Naive thymus-derived CD4-positive, alpha-beta T cell (primary cell): ENCODE measurements at regions of chr6 and their contacts with region 1.

Region 1: GRCh38 chr6:149316798-149317655 is 485 bp upstream of the TAB2 start:
- DNase-seq: peak; percentile 83 to 91 (median 88)
- ATAC-seq: peak; percentile 86
- H3K4me3 ChIP-seq: peak overlapping the region; percentile 73
- H3K4me3 Mint-ChIP-seq: peak overlapping the region; percentile 74 to 99 (median 86)
- H3K27ac ChIP-seq: peak overlapping the region; percentile 95
- H3K27ac Mint-ChIP-seq: peak overlapping the region; percentile 81 to 92 (median 86)
- H3K4me1 ChIP-seq: peaks cover 13 to 26% of the 10 kb centered on the region in 2 donors
- H3K4me1 Mint-ChIP-seq: peaks cover 23 to 56% (median 42%) of the 10 kb centered on the region in 7 donors
- H3K27me3 ChIP-seq: no peaks in the 10 kb centered on the region
- H3K27me3 Mint-ChIP-seq: no peaks in the 10 kb centered on the region

Region 2: GRCh38 chr6:149140137-149140909 is 176.7 kb before region 1 on chr6:
- CTCF ChIA-PET with region 1: no interaction called
- POLR2A ChIA-PET with region 1: interaction called, 8 read pairs
- intact Hi-C with region 1: loop called (anchors 1 to 2 kb)
- DNase-seq: peak; percentile 7 to 67 (median 27)
- ATAC-seq: peak; percentile 82
- H3K4me3 ChIP-seq: peak overlapping the region; percentile 14
- H3K4me3 Mint-ChIP-seq: peak overlapping the region; percentile 17 to 89 (median 78)
- H3K27ac ChIP-seq: peak overlapping the region; percentile 88
- H3K27ac Mint-ChIP-seq: peak overlapping the region in 8 of 9 donors; percentile 95 to 100 (median 98)
- H3K4me1 ChIP-seq: peaks cover 12 to 27% of the 10 kb centered on the region in 2 donors
- H3K4me1 Mint-ChIP-seq: peaks cover 20 to 61% (median 44%) of the 10 kb centered on the region in 7 donors
- H3K27me3 ChIP-seq: no peaks in the 10 kb centered on the region
- H3K27me3 Mint-ChIP-seq: no peaks in the 10 kb centered on the region

Region 3: DNA sequence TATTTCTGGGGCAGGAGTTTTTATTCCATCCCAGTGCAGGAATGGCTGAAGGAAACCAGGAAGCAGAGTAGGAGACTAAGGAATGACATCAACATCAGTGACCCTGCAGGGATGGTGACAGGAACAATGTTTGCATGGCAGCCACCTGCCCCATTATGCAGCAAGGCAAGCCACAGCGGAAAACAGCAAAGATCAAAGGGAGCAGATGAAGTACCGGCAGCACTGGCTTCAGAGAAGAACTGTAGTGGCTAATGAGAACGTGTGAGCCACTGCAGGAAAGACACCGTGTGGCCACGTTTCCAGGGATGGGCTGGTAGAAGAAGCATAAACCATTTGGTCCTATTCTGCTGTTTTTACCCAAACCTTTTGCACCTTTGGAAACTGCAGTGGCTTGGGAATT is 52.4 kb before region 1 on chr6:
- CTCF ChIA-PET with region 1: no interaction called
- POLR2A ChIA-PET with region 1: interaction called, 3 read pairs
- intact Hi-C with region 1: loop called (anchors 1 to 2 kb)
- DNase-seq: peak in 8 of 9 donors; percentile 42 to 65 (median 50)
- ATAC-seq: peak; percentile 69
- H3K4me3 ChIP-seq: no peak overlapping the region
- H3K4me3 Mint-ChIP-seq: peak overlapping the region; percentile 29 to 76 (median 67)
- H3K27ac ChIP-seq: no peak overlapping the region
- H3K27ac Mint-ChIP-seq: peak overlapping the region; percentile 49 to 87 (median 74)
- H3K4me1 ChIP-seq: peaks cover 0 to 54% of the 10 kb centered on the region in 2 donors
- H3K4me1 Mint-ChIP-seq: peaks cover 33 to 59% (median 52%) of the 10 kb centered on the region in 7 donors
- H3K27me3 ChIP-seq: no peaks in the 10 kb centered on the region
- H3K27me3 Mint-ChIP-seq: no peaks in the 10 kb centered on the region

Region 4: DNA sequence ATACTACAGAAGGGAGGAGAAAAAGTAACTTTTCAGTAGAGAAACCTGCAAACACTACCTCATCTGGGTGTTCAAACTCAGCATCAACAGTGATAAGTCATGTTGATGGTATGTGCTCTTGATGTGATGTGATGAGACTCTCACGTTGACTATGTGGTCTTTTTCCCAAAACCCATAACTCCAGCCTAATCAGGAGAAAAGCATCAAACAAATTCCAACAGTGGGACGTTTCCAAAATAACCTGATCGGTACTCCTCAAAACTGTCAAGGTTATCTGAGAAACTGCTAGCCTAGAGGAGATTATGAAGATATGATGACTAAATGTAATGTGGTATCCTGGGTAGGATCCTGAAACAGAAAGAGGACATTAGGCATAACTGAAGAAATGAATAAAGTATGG is 41.4 kb before region 1 on chr6:
- CTCF ChIA-PET with region 1: no interaction called
- POLR2A ChIA-PET with region 1: no interaction called
- intact Hi-C with region 1: no loop called
- DNase-seq: no peak
- ATAC-seq: no peak
- H3K4me3 ChIP-seq: no peak overlapping the region
- H3K4me3 Mint-ChIP-seq: no peak overlapping the region
- H3K27ac ChIP-seq: no peak overlapping the region
- H3K27ac Mint-ChIP-seq: no peak overlapping the region
- H3K4me1 ChIP-seq: peaks cover 12 to 24% of the 10 kb centered on the region in 2 donors
- H3K4me1 Mint-ChIP-seq: peaks cover 24 to 56% (median 41%) of the 10 kb centered on the region in 7 donors
- H3K27me3 ChIP-seq: no peaks in the 10 kb centered on the region
- H3K27me3 Mint-ChIP-seq: no peaks in the 10 kb centered on the region

Region 5: DNA sequence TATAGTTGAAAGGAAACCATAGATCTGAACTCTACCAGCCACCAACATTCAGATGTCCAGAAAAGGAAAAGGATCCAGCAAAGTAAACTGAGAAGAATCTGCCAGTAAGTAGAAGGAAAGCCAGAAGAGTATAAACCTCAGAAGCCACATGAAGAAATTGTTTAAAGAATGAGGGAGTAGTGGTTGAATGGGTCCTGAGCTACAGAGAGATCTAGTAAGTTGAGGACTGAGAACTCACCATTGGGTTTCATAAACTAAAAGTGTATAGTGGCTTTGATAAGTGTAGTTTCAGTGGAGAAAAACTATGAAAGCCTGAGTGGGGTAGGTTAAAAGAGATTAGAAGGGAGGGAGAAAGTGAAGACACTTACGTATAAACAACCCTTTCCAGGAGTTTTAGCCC is 51.0 kb after region 1 on chr6:
- CTCF ChIA-PET with region 1: no interaction called
- POLR2A ChIA-PET with region 1: interaction called, 8 read pairs
- intact Hi-C with region 1: loop called (anchors 1 to 10 kb)
- DNase-seq: no peak
- ATAC-seq: no peak
- H3K4me3 ChIP-seq: no peak overlapping the region
- H3K4me3 Mint-ChIP-seq: no peak overlapping the region
- H3K27ac ChIP-seq: peak overlapping the region; percentile 21
- H3K27ac Mint-ChIP-seq: no peak overlapping the region
- H3K4me1 ChIP-seq: peaks cover 40 to 57% of the 10 kb centered on the region in 2 donors
- H3K4me1 Mint-ChIP-seq: peaks cover 28 to 44% (median 30%) of the 10 kb centered on the region in 7 donors
- H3K27me3 ChIP-seq: no peaks in the 10 kb centered on the region
- H3K27me3 Mint-ChIP-seq: no peaks in the 10 kb centered on the region

Region 6: DNA sequence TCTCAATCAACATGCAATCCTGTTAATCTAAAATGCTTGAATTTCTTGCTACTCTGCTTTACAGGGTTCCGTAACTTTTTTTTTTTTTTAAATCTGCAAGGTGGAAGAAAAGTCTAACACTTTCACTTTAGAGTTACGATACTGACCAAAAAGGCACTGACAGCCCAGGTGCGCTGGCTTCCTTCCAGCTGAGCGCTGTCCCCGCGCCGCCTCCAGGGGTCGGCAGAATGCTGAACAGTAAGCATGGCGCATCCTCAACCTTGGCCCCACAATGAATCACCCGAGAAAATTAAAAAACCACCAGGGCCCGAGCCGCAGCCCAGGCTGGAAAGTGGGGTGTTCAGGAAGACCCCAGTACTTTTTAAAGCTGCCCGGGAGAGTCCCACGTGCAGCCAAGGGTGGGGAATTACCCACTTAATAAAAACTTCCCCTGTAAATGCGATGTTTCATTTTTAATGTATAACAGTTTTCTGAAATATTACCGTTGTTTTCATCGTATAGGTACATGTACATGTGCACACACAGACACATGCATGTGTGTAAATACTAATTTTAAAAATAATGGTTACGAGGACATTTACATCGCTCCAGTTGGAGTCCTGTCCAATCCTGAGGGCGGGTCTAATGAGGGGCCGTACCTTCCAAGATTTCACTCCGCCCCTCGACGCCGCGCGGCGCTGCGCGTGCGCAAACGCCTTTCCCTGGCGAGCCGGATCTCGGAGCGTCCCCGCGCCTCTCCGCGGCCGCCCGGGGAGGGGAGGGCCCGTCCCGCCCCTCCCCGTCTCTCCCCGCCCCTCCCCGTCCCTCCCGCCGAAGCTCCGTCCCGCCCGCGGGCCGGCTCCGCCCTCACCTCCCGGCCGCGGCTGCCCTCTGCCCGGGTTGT is 248.7 kb after region 1 on chr6 and contains the start of gene GINM1:
- CTCF ChIA-PET with region 1: no interaction called
- POLR2A ChIA-PET with region 1: interaction called, 5 read pairs
- intact Hi-C with region 1: loop called in 1 of 2 experiments (anchors 1 kb)
- DNase-seq: peak; percentile 92 to 99 (median 96)
- ATAC-seq: peak; percentile 94
- H3K4me3 ChIP-seq: peak within 1 kb of the TSS; percentile 89
- H3K4me3 Mint-ChIP-seq: peak within 1 kb of the TSS; percentile 93 to 99 (median 97)
- H3K27ac ChIP-seq: peak within 1 kb of the TSS; percentile 95
- H3K27ac Mint-ChIP-seq: peak within 1 kb of the TSS; percentile 87 to 97 (median 97)
- H3K4me1 ChIP-seq: peaks cover 0 to 6% of the 10 kb centered on the region in 2 donors
- H3K4me1 Mint-ChIP-seq: peaks cover 3 to 39% (median 19%) of the 10 kb centered on the region in 7 donors
- H3K27me3 ChIP-seq: no peaks in the 10 kb centered on the region
- H3K27me3 Mint-ChIP-seq: peaks cover 0 to 7% (median 0%) of the 10 kb centered on the region in 5 donors
- total RNA-seq, gene GINM1: 14.4 to 27.3 (median 19.9) TPM